Dendritic cell treated with granulocyte-macrophage colony-stimulating factor and Interleukin-4, amounts not matched to agents 40 ng/mL and 50 ng/mL, for 4 days (primary cell): ENCODE measurements at regions of chr6 and their contacts with region 1.

Region 1: GRCh38 chr6:30489081-30490025 is at the start of gene HLA-E:
- H3K4me3 Mint-ChIP-seq: peak within 1 kb of the TSS; percentile 97
- H3K27ac Mint-ChIP-seq: peak within 1 kb of the TSS; percentile 98
- H3K4me1 Mint-ChIP-seq: peaks cover 49% of the 10 kb centered on the region
- H3K27me3 Mint-ChIP-seq: peaks cover 4% of the 10 kb centered on the region

Region 2: GRCh38 chr6:30463651-30464618 is 25.4 kb before region 1 on chr6:
- intact Hi-C with region 1: no loop called
- H3K4me3 Mint-ChIP-seq: peak overlapping the region; percentile 30
- H3K27ac Mint-ChIP-seq: no peak overlapping the region
- H3K4me1 Mint-ChIP-seq: peaks cover 53% of the 10 kb centered on the region
- H3K27me3 Mint-ChIP-seq: peaks cover 92% of the 10 kb centered on the region

Region 3: GRCh38 chr6:30515932-30516753 is 26.8 kb after region 1 on chr6:
- intact Hi-C with region 1: loop called (anchors 1 kb)
- H3K4me3 Mint-ChIP-seq: peak overlapping the region; percentile 66
- H3K27ac Mint-ChIP-seq: peak overlapping the region; percentile 91
- H3K4me1 Mint-ChIP-seq: peaks cover 38% of the 10 kb centered on the region
- H3K27me3 Mint-ChIP-seq: no peaks in the 10 kb centered on the region